GM12878 (cell line): ENCODE measurements at regions of chr5 and their contacts with region 1.

Region 1: DNA sequence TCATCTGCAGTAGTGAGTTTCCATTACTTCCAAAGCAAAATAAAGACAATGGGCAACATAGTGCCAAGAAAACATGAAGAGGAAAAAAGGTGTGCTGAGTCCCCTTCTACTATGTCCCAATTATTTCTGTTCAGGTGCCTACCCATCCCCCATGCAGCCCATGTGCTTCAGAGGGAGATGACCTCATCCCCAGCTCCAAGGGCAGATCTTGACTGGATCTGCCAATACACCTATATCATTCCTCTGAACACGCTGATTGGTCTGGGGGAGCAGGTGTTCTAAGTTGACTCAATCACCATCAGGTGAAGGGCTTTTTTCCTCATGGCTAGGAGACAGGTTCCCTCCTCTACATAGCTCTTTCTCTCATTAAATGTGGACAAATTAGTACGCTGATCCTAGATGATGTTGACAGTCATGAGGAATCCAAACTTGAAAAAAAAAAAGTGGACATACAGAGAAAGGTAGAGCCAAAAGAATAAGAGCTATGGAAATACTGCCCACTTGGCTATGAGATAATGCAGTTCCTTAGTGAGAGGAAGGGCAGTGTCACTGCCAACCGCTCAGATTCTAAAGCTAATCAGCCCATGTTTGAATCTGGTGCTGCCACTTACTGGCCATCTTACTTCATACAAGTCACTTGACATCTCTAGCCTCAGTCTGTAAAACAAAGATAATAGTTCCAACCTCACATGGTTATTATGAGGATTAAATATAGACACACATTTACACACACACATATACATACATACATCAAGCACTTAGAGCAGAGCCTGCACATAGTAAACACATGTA is 23.1 kb downstream of the PRELID2 start:
- DNase-seq: no peak
- ATAC-seq: peak; percentile 46; the same call in 2 of the 3 replicates
- H3K4me3 ChIP-seq: no peak overlapping the region
- H3K27ac ChIP-seq: no peak overlapping the region
- H3K4me1 ChIP-seq: no peaks in the 10 kb centered on the region
- H3K27me3 ChIP-seq: no peaks in the 10 kb centered on the region
- CTCF ChIP-seq: peak in 2 of 3 experiments; percentile 7 to 12; a peak in 1 of 6 replicates
- EP300 ChIP-seq: no peak
- POLR2A ChIP-seq: no peak
- RAD21 ChIP-seq: no peak

Region 2: GRCh38 chr5:145574889-145575573 is 237.0 kb before region 1 on chr5:
- CTCF ChIA-PET with region 1: no interaction called
- POLR2A ChIA-PET with region 1: no interaction called
- RAD21 ChIA-PET with region 1: no interaction called
- SMC1A ChIA-PET with region 1: no interaction called
- in situ Hi-C with region 1: no loop called
- intact Hi-C with region 1: loop called (anchors 10 kb)
- DNase-seq: no peak
- ATAC-seq: no peak
- H3K4me3 ChIP-seq: no peak overlapping the region
- H3K27ac ChIP-seq: no peak overlapping the region
- H3K4me1 ChIP-seq: no peaks in the 10 kb centered on the region
- H3K27me3 ChIP-seq: no peaks in the 10 kb centered on the region
- CTCF ChIP-seq: no peak
- EP300 ChIP-seq: no peak
- POLR2A ChIP-seq: no peak
- RAD21 ChIP-seq: no peak

Region 3: DNA sequence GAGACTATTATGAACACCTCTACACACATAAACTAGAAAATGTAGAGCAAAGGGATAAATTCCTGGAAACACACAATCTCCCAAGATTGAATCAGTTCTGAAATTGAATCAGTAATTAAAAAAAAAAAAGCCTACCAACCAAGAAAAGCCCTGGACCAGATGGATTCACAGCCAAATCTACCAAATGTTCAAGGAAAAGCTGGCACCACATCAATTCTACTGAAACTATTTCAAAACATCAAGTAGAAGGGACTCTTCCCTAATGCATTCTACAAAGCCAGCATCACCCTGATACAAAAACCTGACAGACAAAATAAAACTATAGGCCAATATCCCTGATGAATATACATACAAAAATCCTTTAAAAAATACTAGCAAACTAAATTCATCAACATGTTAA is 86.1 kb after region 1 on chr5:
- CTCF ChIA-PET with region 1: no interaction called
- POLR2A ChIA-PET with region 1: no interaction called
- RAD21 ChIA-PET with region 1: no interaction called
- SMC1A ChIA-PET with region 1: no interaction called
- in situ Hi-C with region 1: no loop called
- intact Hi-C with region 1: no loop called
- DNase-seq: no peak
- ATAC-seq: no peak
- H3K4me3 ChIP-seq: no peak overlapping the region
- H3K27ac ChIP-seq: no peak overlapping the region
- H3K4me1 ChIP-seq: no peaks in the 10 kb centered on the region
- H3K27me3 ChIP-seq: no peaks in the 10 kb centered on the region
- CTCF ChIP-seq: no peak
- EP300 ChIP-seq: no peak
- POLR2A ChIP-seq: no peak
- RAD21 ChIP-seq: no peak